ENCODE measurements at regions of chr17 and their contacts with region 1.

Region 1: GRCh38 chr17:34692920-34693319 is 113.5 kb downstream of the TMEM132E start:
- DNase-seq: no peak
- ATAC-seq: no peak
- H3K4me3 ChIP-seq: no peak overlapping the region
- H3K27ac ChIP-seq: no peak overlapping the region
- H3K4me1 ChIP-seq: no peaks in the 10 kb centered on the region
- H3K27me3 ChIP-seq: peaks cover 36% of the 10 kb centered on the region
- CTCF ChIP-seq: no peak
- POLR2A ChIP-seq: no peak
- RAD21 ChIP-seq: no peak

Region 2: GRCh38 chr17:34645594-34645993 is 47.3 kb before region 1 on chr17:
- CTCF ChIA-PET with region 1: no interaction called
- POLR2A ChIA-PET with region 1: no interaction called
- RAD21 ChIA-PET with region 1: no interaction called
- intact Hi-C with region 1: no loop called
- DNase-seq: no peak
- ATAC-seq: no peak
- H3K4me3 ChIP-seq: no peak overlapping the region
- H3K27ac ChIP-seq: no peak overlapping the region
- H3K4me1 ChIP-seq: no peaks in the 10 kb centered on the region
- H3K27me3 ChIP-seq: peaks cover 60% of the 10 kb centered on the region
- CTCF ChIP-seq: no peak
- POLR2A ChIP-seq: no peak
- RAD21 ChIP-seq: no peak

Region 3: DNA sequence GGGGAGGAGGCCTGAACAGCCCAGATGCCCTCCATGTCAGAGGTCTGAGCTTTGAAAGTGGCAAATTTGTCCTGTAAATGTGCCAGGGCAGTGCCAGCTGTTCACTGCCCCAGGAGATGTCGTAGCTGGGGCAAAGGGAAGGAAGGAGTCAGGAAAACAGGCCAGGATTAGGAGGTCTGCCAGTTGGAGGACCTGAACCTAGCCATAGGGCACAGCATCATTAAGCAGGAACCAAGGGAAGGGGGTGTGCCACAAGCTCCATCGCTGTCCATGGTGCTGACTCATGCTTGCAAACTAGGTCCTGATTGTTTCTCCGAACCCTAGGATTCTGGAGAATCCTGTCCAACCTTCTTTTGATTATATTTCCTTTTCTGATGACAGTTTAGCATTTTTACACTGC is 10.6 kb after region 1 on chr17:
- CTCF ChIA-PET with region 1: no interaction called
- POLR2A ChIA-PET with region 1: no interaction called
- RAD21 ChIA-PET with region 1: no interaction called
- intact Hi-C with region 1: no loop called
- DNase-seq: no peak
- ATAC-seq: no peak
- H3K4me3 ChIP-seq: no peak overlapping the region
- H3K27ac ChIP-seq: no peak overlapping the region
- H3K4me1 ChIP-seq: no peaks in the 10 kb centered on the region
- H3K27me3 ChIP-seq: peaks cover 28% of the 10 kb centered on the region; the same call in 1 of the 2 replicates
- CTCF ChIP-seq: no peak
- POLR2A ChIP-seq: no peak
- RAD21 ChIP-seq: no peak

Region 4: GRCh38 chr17:34763728-34764665 is 71.1 kb after region 1 on chr17:
- CTCF ChIA-PET with region 1: no interaction called
- POLR2A ChIA-PET with region 1: no interaction called
- RAD21 ChIA-PET with region 1: no interaction called
- intact Hi-C with region 1: no loop called
- DNase-seq: no peak
- ATAC-seq: no peak
- H3K4me3 ChIP-seq: no peak overlapping the region
- H3K27ac ChIP-seq: no peak overlapping the region
- H3K4me1 ChIP-seq: no peaks in the 10 kb centered on the region
- H3K27me3 ChIP-seq: peaks cover 62% of the 10 kb centered on the region
- CTCF ChIP-seq: no peak
- POLR2A ChIP-seq: no peak
- RAD21 ChIP-seq: no peak

Region 5: GRCh38 chr17:34797720-34798119 is 104.8 kb after region 1 on chr17:
- CTCF ChIA-PET with region 1: no interaction called
- POLR2A ChIA-PET with region 1: no interaction called
- RAD21 ChIA-PET with region 1: no interaction called
- intact Hi-C with region 1: loop called (anchors 10 kb)
- DNase-seq: no peak
- ATAC-seq: 0 out of 2 replicates have a peak, but pooled peaks have one; percentile 52
- H3K4me3 ChIP-seq: no peak overlapping the region
- H3K27ac ChIP-seq: no peak overlapping the region
- H3K4me1 ChIP-seq: no peaks in the 10 kb centered on the region
- H3K27me3 ChIP-seq: peaks cover 42% of the 10 kb centered on the region
- CTCF ChIP-seq: no peak
- POLR2A ChIP-seq: no peak
- RAD21 ChIP-seq: no peak

Region 6: DNA sequence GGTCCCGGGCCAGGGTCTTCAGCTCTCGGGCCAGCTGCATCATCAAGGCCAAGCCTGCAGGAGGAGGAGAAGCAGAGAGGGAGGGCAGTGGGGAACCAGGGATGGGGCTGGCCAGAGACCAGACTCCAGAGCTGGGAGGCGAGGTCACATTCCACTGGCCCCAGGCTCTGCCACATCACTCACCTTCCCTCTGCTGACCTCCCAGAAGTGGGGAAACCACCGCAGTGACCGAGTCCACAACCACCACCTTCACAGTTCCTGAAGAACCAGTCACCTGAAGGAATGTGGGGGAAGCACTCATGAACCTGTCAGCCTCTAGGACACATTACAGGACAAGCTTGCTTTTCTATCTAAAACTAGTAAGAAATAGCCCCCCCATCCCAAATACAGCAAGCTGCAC is 410.4 kb after region 1 on chr17:
- CTCF ChIA-PET with region 1: no interaction called
- POLR2A ChIA-PET with region 1: no interaction called
- RAD21 ChIA-PET with region 1: no interaction called
- intact Hi-C with region 1: no loop called
- DNase-seq: no peak
- ATAC-seq: peak; percentile 53; the same call in 1 of the 2 replicates
- H3K4me3 ChIP-seq: no peak overlapping the region
- H3K27ac ChIP-seq: no peak overlapping the region
- H3K4me1 ChIP-seq: peaks cover 1 to 9% of the 10 kb centered on the region in 2 experiments
- H3K27me3 ChIP-seq: no peaks in the 10 kb centered on the region
- CTCF ChIP-seq: no peak
- POLR2A ChIP-seq: no peak
- RAD21 ChIP-seq: no peak

Measured in HCT116 (cell line).